ENCODE measurements at regions of chr7 and their contacts with region 1.

Region 1: GRCh38 chr7:1357601-1358271 is 101.5 kb downstream of the MICALL2 start:
- DNase-seq: no peak
- H3K4me3 ChIP-seq: no peak overlapping the region
- H3K27ac ChIP-seq: no peak overlapping the region
- H3K4me1 ChIP-seq: no peaks in the 10 kb centered on the region
- H3K27me3 ChIP-seq: peaks cover 54% of the 10 kb centered on the region
- CTCF ChIP-seq: no peak

Region 2: GRCh38 chr7:1251796-1252545 is 105.8 kb before region 1 on chr7:
- CTCF ChIA-PET with region 1: no interaction called
- POLR2A ChIA-PET with region 1: no interaction called
- intact Hi-C with region 1: loop called (anchors 5 kb)
- DNase-seq: no peak
- H3K4me3 ChIP-seq: no peak overlapping the region
- H3K27ac ChIP-seq: no peak overlapping the region
- H3K4me1 ChIP-seq: no peaks in the 10 kb centered on the region
- H3K27me3 ChIP-seq: peaks cover 83% of the 10 kb centered on the region
- CTCF ChIP-seq: no peak

Region 3: DNA sequence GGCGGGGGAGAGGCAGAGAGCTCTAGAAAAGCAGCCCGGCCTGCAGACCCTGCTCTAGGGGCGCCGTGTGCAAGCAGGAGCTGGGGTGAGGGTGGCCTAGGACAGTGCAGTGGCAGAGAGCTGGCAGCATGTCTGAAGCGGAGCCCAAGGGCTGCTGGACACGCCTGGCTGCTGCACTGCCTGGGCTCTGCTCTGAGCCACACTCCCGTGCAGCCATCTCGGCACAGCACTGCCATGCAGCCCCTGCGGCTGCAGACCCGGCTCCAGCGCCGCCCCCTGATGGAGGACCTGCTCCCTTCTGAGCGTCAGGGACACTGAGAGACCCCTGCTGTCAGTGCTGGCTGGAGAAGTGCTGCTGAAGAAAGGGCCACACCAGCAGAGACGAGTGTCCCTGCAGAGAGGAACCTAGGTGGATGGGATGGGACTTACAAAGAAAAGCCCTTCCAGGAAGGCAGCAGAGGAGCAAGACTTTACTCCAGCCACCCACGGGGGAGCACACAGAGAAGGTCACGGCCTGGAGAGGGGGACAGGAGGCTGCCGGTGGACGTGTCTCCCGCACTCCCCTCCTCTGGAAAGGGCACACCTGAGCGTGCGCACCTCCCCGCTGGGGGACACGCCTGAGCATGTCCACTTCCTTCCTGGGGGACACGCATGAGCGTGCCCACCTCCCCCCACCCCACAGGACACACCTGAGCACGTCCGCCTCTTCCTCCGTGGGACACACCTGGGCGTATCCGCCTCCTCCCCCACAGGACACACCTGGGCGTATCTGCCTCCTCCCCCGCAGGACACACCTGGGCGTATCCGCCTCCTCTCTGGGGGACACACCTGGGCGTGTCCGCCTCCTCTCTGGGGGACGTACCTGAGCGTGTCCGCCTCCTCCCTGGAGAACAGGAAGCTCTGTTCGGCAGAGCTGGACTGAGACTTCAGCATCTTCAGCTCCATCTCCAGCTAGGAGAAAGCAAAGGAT is 622.1 kb after region 1 on chr7:
- CTCF ChIA-PET with region 1: no interaction called
- POLR2A ChIA-PET with region 1: interaction called, 24 read pairs
- intact Hi-C with region 1: no loop called
- DNase-seq: no peak
- H3K4me3 ChIP-seq: no peak overlapping the region
- H3K27ac ChIP-seq: no peak overlapping the region
- H3K4me1 ChIP-seq: no peaks in the 10 kb centered on the region
- H3K27me3 ChIP-seq: no peaks in the 10 kb centered on the region
- CTCF ChIP-seq: no peak

Region 4: DNA sequence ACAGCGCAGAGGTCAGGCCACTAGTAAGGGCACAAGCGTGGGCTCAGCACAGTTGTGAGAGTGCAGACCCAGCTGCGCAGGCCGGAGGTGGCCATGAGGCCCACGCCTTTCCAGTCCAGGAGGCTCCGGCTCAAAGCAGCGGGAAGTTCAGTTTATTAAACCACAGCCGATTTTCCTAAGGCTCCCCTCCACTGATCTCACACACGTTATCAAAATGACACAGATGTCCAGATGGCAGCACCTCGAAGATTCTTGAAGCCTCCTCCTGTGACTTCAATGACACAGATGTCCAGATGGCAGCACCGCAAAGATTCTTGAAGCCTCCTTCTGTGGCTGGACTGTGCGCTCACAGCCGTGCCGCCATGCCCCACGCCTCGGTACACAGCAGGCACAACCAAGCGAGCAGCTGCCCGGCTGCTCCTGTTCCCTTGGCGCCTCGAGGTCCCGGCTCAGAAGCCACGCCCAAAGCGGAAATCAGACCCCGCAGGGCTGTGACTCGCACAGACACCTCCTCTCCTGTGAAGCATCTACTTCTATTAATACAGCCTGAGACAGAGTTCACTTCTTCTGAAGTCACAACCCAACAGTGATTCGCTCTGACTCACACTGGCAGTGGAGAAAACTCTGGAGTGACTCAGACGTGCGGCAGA is 752.3 kb after region 1 on chr7:
- CTCF ChIA-PET with region 1: no interaction called
- POLR2A ChIA-PET with region 1: no interaction called
- intact Hi-C with region 1: no loop called
- DNase-seq: peak; percentile 78 to 86
- H3K4me3 ChIP-seq: no peak overlapping the region
- H3K27ac ChIP-seq: no peak overlapping the region
- H3K4me1 ChIP-seq: peaks cover 8% of the 10 kb centered on the region
- H3K27me3 ChIP-seq: no peaks in the 10 kb centered on the region
- CTCF ChIP-seq: no peak